GM12878 (cell line): ENCODE measurements at regions of chr17 and their contacts with region 1.

Region 1: DNA sequence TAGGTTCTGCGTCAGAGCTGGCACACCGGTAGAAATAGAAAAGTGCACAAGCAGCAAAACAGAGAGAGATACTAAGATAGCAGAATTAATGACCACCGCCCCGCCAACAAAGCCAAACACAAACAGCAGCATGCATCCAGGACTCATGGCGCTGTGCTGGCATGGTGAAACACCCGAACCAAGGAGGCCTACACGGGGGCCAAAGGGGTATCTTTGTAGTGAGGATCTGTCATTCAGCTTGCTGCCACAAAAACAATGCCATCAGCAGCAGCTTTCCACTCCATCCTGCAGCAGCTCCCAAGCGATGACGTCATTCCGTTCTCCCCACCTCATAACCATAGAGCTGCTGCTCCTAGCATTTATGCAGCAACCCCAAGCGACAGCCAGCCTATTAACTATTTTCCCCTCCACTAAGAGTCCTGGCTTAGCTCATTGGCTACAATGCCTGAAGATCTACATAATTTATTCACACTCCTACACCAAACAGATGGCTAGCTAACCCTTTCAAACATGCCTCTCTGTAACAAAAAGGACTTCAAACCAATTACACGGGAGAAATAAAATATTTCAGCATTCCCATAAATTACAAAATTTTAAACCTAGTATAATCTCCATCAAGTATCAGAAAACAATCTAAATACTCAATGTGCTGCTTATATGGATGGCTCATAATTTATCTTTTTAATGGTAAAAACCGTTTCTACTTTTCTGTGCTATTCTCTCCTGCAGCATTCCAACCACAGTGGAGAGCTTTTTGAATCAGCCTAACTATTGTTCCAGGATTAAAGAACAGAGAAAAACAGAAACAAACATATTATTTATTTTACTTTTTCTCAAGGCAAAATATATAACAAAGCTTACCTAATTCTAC is 73.9 kb downstream of the SPAG9 start:
- DNase-seq: no peak
- ATAC-seq: no peak
- H3K4me3 ChIP-seq: no peak overlapping the region
- H3K27ac ChIP-seq: no peak overlapping the region
- H3K4me1 ChIP-seq: peaks cover 29% of the 10 kb centered on the region
- H3K27me3 ChIP-seq: no peaks in the 10 kb centered on the region
- CTCF ChIP-seq: no peak
- EP300 ChIP-seq: no peak
- POLR2A ChIP-seq: no peak
- RAD21 ChIP-seq: no peak

Region 2: DNA sequence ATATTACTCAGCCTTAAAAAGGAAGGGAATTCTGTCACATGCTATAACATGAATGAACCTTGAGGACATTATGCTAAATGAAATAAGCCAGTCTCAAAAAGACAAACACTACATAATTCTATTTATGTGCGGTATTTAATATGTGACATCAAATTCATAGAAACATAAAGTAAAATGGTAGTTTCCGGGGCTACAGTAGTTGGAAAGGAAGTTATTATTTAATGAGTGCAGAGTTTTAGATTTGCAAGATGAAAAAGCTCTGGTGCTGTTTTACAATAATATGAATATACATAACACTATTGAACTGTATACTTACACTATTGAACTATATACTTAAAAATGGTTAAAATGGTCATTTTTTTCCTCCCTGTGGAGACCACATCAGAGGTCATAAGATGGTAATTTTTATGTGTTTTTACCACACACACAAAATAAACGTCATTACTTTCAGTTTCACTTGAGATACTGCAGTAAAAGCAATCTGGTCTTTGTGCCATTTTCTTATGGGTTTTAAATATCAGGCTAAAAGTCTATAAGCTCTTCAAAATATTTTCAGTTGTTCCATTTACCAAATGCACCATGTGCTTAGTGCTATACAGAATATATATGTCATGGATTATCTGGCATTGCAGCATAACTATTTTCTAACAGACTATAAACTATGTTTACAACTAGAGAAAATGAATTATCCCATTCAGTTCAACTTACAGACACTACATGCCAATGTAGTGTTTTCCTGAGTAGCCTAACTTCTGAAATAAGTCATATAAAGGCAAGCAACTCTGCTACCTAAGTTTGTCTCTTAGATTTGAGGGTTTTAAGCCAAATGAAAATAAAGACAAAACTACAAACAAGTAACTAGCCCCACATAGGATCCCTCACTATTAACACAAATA is 16.9 kb before region 1 on chr17:
- CTCF ChIA-PET with region 1: interaction called, 73 read pairs
- POLR2A ChIA-PET with region 1: interaction called, 9 read pairs
- RAD21 ChIA-PET with region 1: interaction called, 6 read pairs
- SMC1A ChIA-PET with region 1: interaction called, 52 read pairs
- in situ Hi-C with region 1: no loop called
- intact Hi-C with region 1: no loop called
- DNase-seq: no peak
- ATAC-seq: peak; percentile 87
- H3K4me3 ChIP-seq: no peak overlapping the region
- H3K27ac ChIP-seq: peak overlapping the region; percentile 51
- H3K4me1 ChIP-seq: peaks cover 5% of the 10 kb centered on the region
- H3K27me3 ChIP-seq: no peaks in the 10 kb centered on the region
- CTCF ChIP-seq: no peak
- EP300 ChIP-seq: 0 out of 4 replicates have a peak, but pooled peaks of 1 of the 2 experiments have one; percentile 9
- POLR2A ChIP-seq: no peak
- RAD21 ChIP-seq: no peak

Region 3: GRCh38 chr17:51035431-51035830 is 11.3 kb before region 1 on chr17:
- CTCF ChIA-PET with region 1: interaction called, 73 read pairs
- POLR2A ChIA-PET with region 1: interaction called, 9 read pairs
- RAD21 ChIA-PET with region 1: interaction called, 6 read pairs
- SMC1A ChIA-PET with region 1: interaction called, 52 read pairs
- in situ Hi-C with region 1: no loop called
- intact Hi-C with region 1: no loop called
- DNase-seq: no peak
- ATAC-seq: no peak; the same call in 2 of the 3 replicates
- H3K4me3 ChIP-seq: no peak overlapping the region
- H3K27ac ChIP-seq: no peak overlapping the region; the same call in 1 of the 2 replicates
- H3K4me1 ChIP-seq: peaks cover 7% of the 10 kb centered on the region
- H3K27me3 ChIP-seq: no peaks in the 10 kb centered on the region
- CTCF ChIP-seq: no peak
- EP300 ChIP-seq: no peak
- POLR2A ChIP-seq: no peak
- RAD21 ChIP-seq: no peak

Region 4: DNA sequence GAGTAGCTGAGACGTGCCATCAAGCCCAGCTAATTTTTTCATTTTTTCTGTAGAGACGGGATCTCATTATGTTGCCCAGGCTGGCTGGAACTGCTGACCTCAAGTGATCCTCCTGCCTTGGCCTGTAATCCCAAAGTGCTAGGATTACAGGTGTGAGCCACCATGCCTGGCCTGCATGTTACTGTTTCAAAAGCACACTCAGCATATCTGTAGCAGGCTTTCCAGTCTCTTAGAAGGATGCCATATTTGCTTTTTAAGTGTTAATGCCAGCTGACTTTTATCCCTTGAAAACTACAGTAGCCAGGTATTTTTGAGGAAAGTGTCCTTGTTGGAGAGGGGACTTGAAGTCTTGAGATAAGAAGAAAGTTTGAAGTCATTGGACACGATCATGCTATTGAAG is 89.2 kb after region 1 on chr17:
- CTCF ChIA-PET with region 1: no interaction called
- POLR2A ChIA-PET with region 1: no interaction called
- RAD21 ChIA-PET with region 1: no interaction called
- SMC1A ChIA-PET with region 1: no interaction called
- in situ Hi-C with region 1: no loop called
- intact Hi-C with region 1: no loop called
- DNase-seq: no peak
- ATAC-seq: no peak
- H3K4me3 ChIP-seq: no peak overlapping the region
- H3K27ac ChIP-seq: no peak overlapping the region
- H3K4me1 ChIP-seq: peaks cover 13% of the 10 kb centered on the region
- H3K27me3 ChIP-seq: no peaks in the 10 kb centered on the region
- CTCF ChIP-seq: no peak
- EP300 ChIP-seq: no peak
- POLR2A ChIP-seq: no peak
- RAD21 ChIP-seq: no peak